HepG2 (cell line): ENCODE measurements at regions of chr6 and their contacts with region 1.

Region 1: GRCh38 chr6:150813319-150813992 is 52.0 kb upstream of the MTHFD1L start:
- DNase-seq: no peak
- ATAC-seq: no peak
- H3K4me3 ChIP-seq: no peak overlapping the region
- H3K27ac ChIP-seq: no peak overlapping the region
- H3K4me1 ChIP-seq: no peaks in the 10 kb centered on the region
- H3K27me3 ChIP-seq: 0 out of 5 replicates have a peak, but pooled peaks cover 0 to 5% of the 10 kb centered on the region in 2 experiments
- CTCF ChIP-seq: no peak
- EP300 ChIP-seq: no peak
- POLR2A ChIP-seq: no peak
- RAD21 ChIP-seq: no peak

Region 2: DNA sequence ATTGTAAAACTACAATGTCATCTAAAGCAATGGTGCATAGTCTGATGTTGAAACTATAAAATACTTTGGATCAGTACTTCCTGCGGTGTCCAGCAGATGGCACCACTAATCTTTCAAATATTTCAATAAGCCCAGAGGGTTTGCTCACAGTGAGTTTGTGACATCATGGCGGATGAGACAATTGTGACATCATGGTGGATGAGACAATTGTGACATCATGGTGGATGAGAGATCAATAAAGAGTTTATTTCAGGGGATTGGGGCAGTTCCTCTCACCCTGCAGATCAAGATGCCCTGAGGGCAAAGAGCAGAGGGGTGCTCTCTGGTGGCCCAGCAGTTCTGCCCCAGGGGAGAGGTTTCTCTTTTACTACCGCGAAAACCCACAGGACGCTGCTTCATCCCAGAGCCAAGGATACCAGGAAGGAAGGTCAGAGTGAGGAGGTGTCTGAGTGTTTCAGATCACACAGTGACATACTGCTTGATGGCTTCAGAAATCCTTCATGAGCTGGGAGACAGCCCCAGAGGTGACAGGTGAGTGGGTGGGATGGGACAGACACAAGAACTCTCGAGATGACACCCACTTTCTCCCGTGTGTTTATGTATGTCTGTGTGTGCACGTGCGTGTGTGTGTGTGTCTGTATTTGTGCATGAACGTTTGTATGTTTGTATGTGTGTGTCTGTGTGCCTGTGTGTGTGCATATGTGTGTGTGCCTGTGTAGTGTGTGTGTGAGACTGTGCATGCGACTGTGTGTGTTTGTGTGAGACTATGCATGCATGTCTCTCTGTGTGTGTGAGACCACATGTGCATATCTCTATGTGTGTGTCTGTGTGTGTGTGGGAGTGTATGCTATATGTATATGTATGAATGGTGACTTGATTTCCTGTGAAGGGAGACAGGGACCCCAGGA is 879.0 kb before region 1 on chr6:
- CTCF ChIA-PET with region 1: interaction called, 3 read pairs
- POLR2A ChIA-PET with region 1: no interaction called
- in situ Hi-C with region 1: loop called (anchors 10 kb)
- intact Hi-C with region 1: loop called (anchors 10 kb)
- DNase-seq: peak; percentile 64
- ATAC-seq: peak; percentile 57
- H3K4me3 ChIP-seq: no peak overlapping the region
- H3K27ac ChIP-seq: no peak overlapping the region
- H3K4me1 ChIP-seq: peaks cover 12% of the 10 kb centered on the region
- H3K27me3 ChIP-seq: peaks cover 9 to 63% of the 10 kb centered on the region in 2 experiments
- CTCF ChIP-seq: peak; percentile 84
- EP300 ChIP-seq: no peak
- POLR2A ChIP-seq: no peak
- RAD21 ChIP-seq: peak; percentile 80

Region 3: DNA sequence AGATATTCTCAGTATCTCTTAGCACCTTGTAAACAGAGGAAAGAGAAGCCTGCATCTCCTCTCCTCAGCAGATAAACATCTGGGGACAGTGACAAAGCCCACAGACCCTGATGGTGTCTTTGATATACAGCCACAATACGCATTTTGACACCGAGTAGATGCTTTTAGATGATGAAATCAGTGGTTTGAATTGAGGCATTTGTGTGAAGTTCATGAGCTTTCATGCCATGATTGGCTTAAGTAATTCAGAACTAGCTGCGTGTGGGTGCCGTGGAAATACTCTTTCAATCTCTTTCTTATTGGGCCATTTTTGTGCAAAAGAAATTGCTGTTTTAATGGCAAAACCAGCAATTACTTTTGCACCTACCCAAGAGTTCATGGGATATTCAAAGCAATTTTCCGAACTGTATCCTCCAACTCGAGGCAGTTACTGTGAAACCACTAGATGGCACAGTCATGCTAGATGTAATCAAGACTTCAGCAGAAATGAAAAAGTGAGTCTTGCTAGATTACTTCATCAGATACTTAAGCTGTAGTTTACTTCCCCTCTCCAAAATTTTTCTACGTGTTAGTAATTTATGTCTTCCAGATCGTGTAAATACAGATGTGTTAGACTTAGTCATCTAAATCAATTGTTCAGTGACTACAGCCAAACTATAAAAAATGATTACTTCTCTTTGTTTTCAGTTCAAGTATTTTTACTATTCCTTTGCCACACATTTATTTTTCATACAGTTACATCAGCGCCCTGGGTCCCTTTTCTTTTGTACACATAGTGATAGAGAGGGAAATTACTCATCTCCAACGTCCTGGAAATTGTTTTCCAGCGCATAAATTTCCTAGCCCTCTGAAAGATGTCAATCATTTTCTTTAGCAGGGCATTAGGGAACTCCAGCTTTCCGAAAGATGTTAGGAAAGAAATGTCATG is 395.3 kb before region 1 on chr6:
- CTCF ChIA-PET with region 1: interaction called, 107 read pairs
- POLR2A ChIA-PET with region 1: no interaction called
- in situ Hi-C with region 1: loop called (anchors 5 kb)
- intact Hi-C with region 1: loop called (anchors 1 kb)
- DNase-seq: peak; percentile 63
- ATAC-seq: peak; percentile 89
- H3K4me3 ChIP-seq: no peak overlapping the region
- H3K27ac ChIP-seq: no peak overlapping the region
- H3K4me1 ChIP-seq: no peaks in the 10 kb centered on the region
- H3K27me3 ChIP-seq: 0 out of 5 replicates have a peak, but pooled peaks cover 0 to 5% of the 10 kb centered on the region in 2 experiments
- CTCF ChIP-seq: peak; percentile 90
- EP300 ChIP-seq: no peak
- POLR2A ChIP-seq: no peak
- RAD21 ChIP-seq: peak; percentile 79

Region 4: GRCh38 chr6:150865406-150866146 is 52.1 kb after region 1 on chr6 and contains the start of gene MTHFD1L:
- CTCF ChIA-PET with region 1: no interaction called
- POLR2A ChIA-PET with region 1: no interaction called
- in situ Hi-C with region 1: no loop called
- intact Hi-C with region 1: loop called (anchors 1 kb)
- DNase-seq: peak; percentile 73
- ATAC-seq: peak; percentile 71
- H3K4me3 ChIP-seq: peak within 1 kb of the TSS; percentile 72 to 90 (median 87)
- H3K27ac ChIP-seq: peak within 1 kb of the TSS; percentile 78
- H3K4me1 ChIP-seq: peaks cover 23% of the 10 kb centered on the region
- H3K27me3 ChIP-seq: no peaks in the 10 kb centered on the region; a peak in 1 of 5 replicates
- CTCF ChIP-seq: peak; percentile 85
- EP300 ChIP-seq: peak in 1 of 2 experiments; percentile 61; a peak in 1 of 4 replicates
- POLR2A ChIP-seq: peak; percentile 48 to 56; a peak in 2 of 4 replicates
- RAD21 ChIP-seq: peak; percentile 66
- total RNA-seq, gene MTHFD1L: 39.6 and 51.1 TPM in 2 replicates

Region 5: GRCh38 chr6:151335930-151336329 is 522.5 kb after region 1 on chr6:
- CTCF ChIA-PET with region 1: interaction called, 6 read pairs
- POLR2A ChIA-PET with region 1: no interaction called
- in situ Hi-C with region 1: no loop called
- intact Hi-C with region 1: loop called (anchors 1 kb)
- DNase-seq: no peak
- ATAC-seq: no peak
- H3K4me3 ChIP-seq: no peak overlapping the region
- H3K27ac ChIP-seq: no peak overlapping the region
- H3K4me1 ChIP-seq: peaks cover 6% of the 10 kb centered on the region; the same call in 1 of the 2 replicates
- H3K27me3 ChIP-seq: no peaks in the 10 kb centered on the region
- CTCF ChIP-seq: no peak
- EP300 ChIP-seq: no peak
- POLR2A ChIP-seq: no peak
- RAD21 ChIP-seq: no peak